ENCODE measurements at regions of chr11 and their contacts with region 1.

Region 1: GRCh38 chr11:114036156-114036811 is 23.2 kb upstream of the ZBTB16 start:
- ATAC-seq: peak; percentile 96 to 100 (median 98)
- H3K4me3 ChIP-seq: peak overlapping the region in 3 of 5 donors; percentile 8 to 22 (median 15)
- H3K27ac ChIP-seq: no peak overlapping the region
- H3K4me1 ChIP-seq: peaks cover 5 to 8% of the 10 kb centered on the region in 2 donors

Region 2: GRCh38 chr11:113553235-113553634 is 483.0 kb before region 1 on chr11:
- in situ Hi-C with region 1: no loop called
- ATAC-seq: peak in 3 of 8 experiments; percentile 54 to 85 (median 82)
- H3K4me3 ChIP-seq: no peak overlapping the region
- H3K27ac ChIP-seq: no peak overlapping the region
- H3K4me1 ChIP-seq: peaks cover 0 to 3% of the 10 kb centered on the region in 2 donors

Region 3: GRCh38 chr11:114257621-114258558 is 221.6 kb after region 1 on chr11:
- in situ Hi-C with region 1: loop called in 5 of 9 experiments (anchors 10 to 25 kb)
- ATAC-seq: peak in 5 of 8 experiments; percentile 80 to 90 (median 83)
- H3K4me3 ChIP-seq: peak overlapping the region in 1 of 5 donors; percentile 18
- H3K27ac ChIP-seq: peak overlapping the region; percentile 19 to 74
- H3K4me1 ChIP-seq: peaks cover 50 to 69% of the 10 kb centered on the region in 2 donors

Measured in motor neuron (in vitro differentiated cells).